GM12878 (cell line): ENCODE measurements at regions of chr14 and their contacts with region 1.

Region 1: GRCh38 chr14:67943947-67944346 is 124.4 kb downstream of the RAD51B start:
- DNase-seq: peak; percentile 49
- ATAC-seq: peak; percentile 89
- H3K4me3 ChIP-seq: no peak overlapping the region
- H3K27ac ChIP-seq: no peak overlapping the region
- H3K4me1 ChIP-seq: no peaks in the 10 kb centered on the region
- H3K27me3 ChIP-seq: no peaks in the 10 kb centered on the region
- CTCF ChIP-seq: peak; percentile 50 to 78 (median 68); a peak in 5 of 6 replicates
- EP300 ChIP-seq: no peak
- POLR2A ChIP-seq: no peak
- RAD21 ChIP-seq: peak; percentile 94

Region 2: DNA sequence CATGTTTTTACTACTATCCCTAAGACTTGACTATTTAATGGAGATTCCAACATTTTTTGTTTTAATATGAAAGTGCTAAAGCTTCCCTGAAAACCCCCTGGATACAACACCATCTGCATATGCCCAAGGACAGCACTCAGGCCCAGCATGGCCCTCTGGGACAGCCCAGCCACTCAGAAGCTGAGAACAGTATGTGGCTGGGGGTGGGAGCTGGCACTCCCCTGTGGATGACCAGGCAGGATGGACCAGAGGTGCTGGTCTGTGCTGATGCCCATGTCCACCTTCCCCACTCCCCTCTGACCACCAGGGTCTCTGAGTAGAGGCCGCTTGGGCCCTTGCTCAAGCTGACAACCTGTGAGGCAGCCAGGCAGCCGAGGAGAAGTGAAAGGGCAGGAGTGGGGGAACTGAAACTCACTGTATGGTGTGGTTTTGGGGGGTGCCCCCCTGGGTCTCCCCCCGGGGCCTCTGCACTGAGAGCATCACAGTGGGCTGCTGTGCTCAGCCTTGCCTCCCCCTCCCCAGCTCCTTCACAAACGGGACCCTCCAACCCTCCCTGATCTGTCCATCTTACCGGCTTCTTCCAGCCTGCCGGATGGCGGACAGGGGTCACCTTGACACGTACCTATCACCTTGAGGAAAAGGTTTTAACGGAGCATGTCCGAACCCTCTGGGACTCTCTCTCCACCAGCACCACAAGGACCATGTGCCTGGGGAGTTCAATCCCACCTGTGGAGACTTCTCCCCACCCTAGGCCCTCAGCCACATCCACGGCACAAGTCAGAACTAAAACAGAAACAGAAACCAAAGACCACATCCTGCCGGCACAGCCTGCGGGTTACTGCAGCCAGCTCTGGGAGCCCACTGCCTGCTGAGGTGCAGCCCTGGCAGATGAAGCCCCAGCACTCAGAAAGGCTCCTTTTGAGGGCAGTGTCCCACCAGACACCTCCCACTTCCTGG is 455.7 kb before region 1 on chr14 and contains the start of gene TMEM229B:
- CTCF ChIA-PET with region 1: no interaction called
- POLR2A ChIA-PET with region 1: no interaction called
- RAD21 ChIA-PET with region 1: no interaction called
- SMC1A ChIA-PET with region 1: no interaction called
- in situ Hi-C with region 1: no loop called
- intact Hi-C with region 1: no loop called
- DNase-seq: peak; percentile 94
- ATAC-seq: peak; percentile 95
- H3K4me3 ChIP-seq: peak within 1 kb of the TSS; percentile 50; the same call in 1 of the 2 replicates
- H3K27ac ChIP-seq: peak within 1 kb of the TSS; percentile 96
- H3K4me1 ChIP-seq: peaks cover 47% of the 10 kb centered on the region
- H3K27me3 ChIP-seq: no peaks in the 10 kb centered on the region
- CTCF ChIP-seq: no peak
- EP300 ChIP-seq: peak; percentile 81 to 88
- POLR2A ChIP-seq: no peak; the same call in 1 of the 2 replicates
- RAD21 ChIP-seq: peak; percentile 28; the same call in 1 of the 2 replicates
- polyA plus RNA-seq, gene TMEM229B: 0.24 to 0.32 TPM

Region 3: DNA sequence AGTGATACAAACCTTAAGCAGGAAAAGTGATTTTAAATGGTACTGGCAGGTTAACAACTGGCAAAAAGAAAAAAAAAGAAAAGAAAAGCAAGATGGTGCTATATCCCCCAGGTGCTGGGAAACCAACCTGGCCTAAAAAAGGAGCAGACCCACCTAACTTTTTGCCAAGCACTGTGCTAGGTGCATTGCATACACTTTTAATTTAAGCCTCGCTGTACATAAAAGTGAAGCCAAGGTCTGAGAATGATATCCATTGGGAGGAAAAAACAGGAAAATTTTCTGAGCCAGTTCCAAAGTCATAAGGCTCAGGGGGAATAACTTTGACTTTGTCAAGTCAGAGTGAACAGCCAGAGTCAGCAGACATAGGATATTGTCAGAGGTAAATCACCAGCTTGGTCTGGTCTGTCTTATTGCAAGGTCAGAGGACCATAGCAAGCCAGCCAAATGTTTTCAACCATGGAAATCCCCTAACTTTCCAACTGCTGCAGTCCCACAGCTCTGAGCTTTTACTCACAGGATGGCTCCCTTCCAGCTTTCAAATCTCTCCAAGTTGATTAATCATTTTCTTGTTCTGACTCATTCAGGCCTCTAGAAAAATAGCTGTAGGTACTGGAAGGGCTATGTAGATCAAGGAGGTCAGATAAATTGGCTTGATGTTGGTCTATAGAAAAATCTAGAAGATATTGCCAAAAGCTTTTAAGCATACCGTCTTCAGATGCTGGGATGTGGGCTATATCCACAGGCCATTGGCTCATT is 288.5 kb after region 1 on chr14:
- CTCF ChIA-PET with region 1: interaction called, 6 read pairs
- POLR2A ChIA-PET with region 1: no interaction called
- RAD21 ChIA-PET with region 1: interaction called, 9 read pairs
- SMC1A ChIA-PET with region 1: interaction called, 19 read pairs
- in situ Hi-C with region 1: no loop called
- intact Hi-C with region 1: no loop called
- DNase-seq: peak; percentile 99
- ATAC-seq: peak; percentile 97
- H3K4me3 ChIP-seq: no peak overlapping the region
- H3K27ac ChIP-seq: peak overlapping the region; percentile 84
- H3K4me1 ChIP-seq: peaks cover 19% of the 10 kb centered on the region
- H3K27me3 ChIP-seq: no peaks in the 10 kb centered on the region
- CTCF ChIP-seq: no peak
- EP300 ChIP-seq: peak; percentile 84 to 87
- POLR2A ChIP-seq: no peak
- RAD21 ChIP-seq: no peak

Region 4: GRCh38 chr14:68274725-68275124 is 330.8 kb after region 1 on chr14:
- CTCF ChIA-PET with region 1: interaction called, 5 read pairs
- POLR2A ChIA-PET with region 1: interaction called, 3 read pairs
- RAD21 ChIA-PET with region 1: interaction called, 12 read pairs
- SMC1A ChIA-PET with region 1: interaction called, 10 read pairs
- in situ Hi-C with region 1: no loop called
- intact Hi-C with region 1: no loop called
- DNase-seq: no peak
- ATAC-seq: no peak
- H3K4me3 ChIP-seq: no peak overlapping the region
- H3K27ac ChIP-seq: peak overlapping the region; percentile 91
- H3K4me1 ChIP-seq: peaks cover 78% of the 10 kb centered on the region
- H3K27me3 ChIP-seq: no peaks in the 10 kb centered on the region
- CTCF ChIP-seq: peak in 1 of 3 experiments; percentile 22; a peak in 1 of 6 replicates
- EP300 ChIP-seq: no peak
- POLR2A ChIP-seq: no peak
- RAD21 ChIP-seq: 0 out of 2 replicates have a peak, but pooled peaks have one; percentile 21

Region 5: GRCh38 chr14:68476212-68476907 is 532.4 kb after region 1 on chr14:
- CTCF ChIA-PET with region 1: no interaction called
- POLR2A ChIA-PET with region 1: no interaction called
- RAD21 ChIA-PET with region 1: no interaction called
- SMC1A ChIA-PET with region 1: interaction called, 3 read pairs
- in situ Hi-C with region 1: no loop called
- intact Hi-C with region 1: loop called (anchors 10 kb)
- DNase-seq: peak; percentile 93
- ATAC-seq: peak; percentile 96
- H3K4me3 ChIP-seq: no peak overlapping the region
- H3K27ac ChIP-seq: peak overlapping the region; percentile 88
- H3K4me1 ChIP-seq: peaks cover 27% of the 10 kb centered on the region
- H3K27me3 ChIP-seq: no peaks in the 10 kb centered on the region
- CTCF ChIP-seq: no peak
- EP300 ChIP-seq: peak; percentile 70 to 97; a peak in 3 of 4 replicates
- POLR2A ChIP-seq: no peak; the same call in 1 of the 2 replicates
- RAD21 ChIP-seq: peak; percentile 30; the same call in 1 of the 2 replicates

Region 6: DNA sequence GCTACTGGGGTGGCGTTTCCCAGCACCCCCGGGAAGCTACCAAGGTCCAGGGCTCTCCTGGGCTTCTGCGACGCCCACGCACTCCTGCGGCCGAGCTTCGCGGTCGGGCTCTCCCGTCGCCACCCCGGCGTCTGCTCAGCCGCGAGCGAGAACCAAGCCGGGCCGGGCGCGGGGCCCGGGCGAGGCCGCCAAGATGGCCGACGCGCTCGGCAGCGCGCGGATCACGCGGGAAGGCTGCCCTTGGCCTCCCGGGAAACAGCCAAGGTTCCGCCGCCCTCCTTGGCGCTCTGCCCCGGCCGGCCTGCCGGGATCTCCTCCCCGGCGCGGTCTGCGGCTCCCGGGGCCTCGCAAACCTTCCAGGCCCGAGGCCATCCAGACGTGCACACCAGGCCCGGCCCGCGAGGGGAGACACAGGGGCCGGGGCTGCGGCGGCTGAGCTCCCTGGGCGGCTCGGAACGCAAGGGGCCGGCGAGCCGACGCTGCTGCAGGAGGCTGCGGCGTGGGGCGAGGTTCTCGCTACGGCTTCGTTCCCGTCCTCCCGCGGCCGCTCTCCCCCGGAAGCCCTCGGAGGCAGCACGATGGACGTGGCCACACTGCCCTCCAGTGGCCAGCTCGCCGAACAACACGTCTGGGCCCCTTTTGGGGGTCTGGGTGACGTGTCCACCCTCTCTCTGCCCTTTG is 872.5 kb after region 1 on chr14:
- CTCF ChIA-PET with region 1: interaction called, 56 read pairs
- POLR2A ChIA-PET with region 1: interaction called, 4 read pairs
- RAD21 ChIA-PET with region 1: interaction called, 33 read pairs
- SMC1A ChIA-PET with region 1: interaction called, 54 read pairs
- in situ Hi-C with region 1: loop called (anchors 10 kb)
- intact Hi-C with region 1: loop called (anchors 1 kb)
- DNase-seq: no peak
- ATAC-seq: peak; percentile 64
- H3K4me3 ChIP-seq: peak overlapping the region; percentile 58
- H3K27ac ChIP-seq: peak overlapping the region; percentile 95
- H3K4me1 ChIP-seq: peaks cover 58% of the 10 kb centered on the region
- H3K27me3 ChIP-seq: no peaks in the 10 kb centered on the region
- CTCF ChIP-seq: peak; percentile 89 to 99 (median 92); a peak in 5 of 6 replicates
- EP300 ChIP-seq: 0 out of 4 replicates have a peak, but pooled peaks of 1 of the 2 experiments have one; percentile 12
- POLR2A ChIP-seq: peak; percentile 80
- RAD21 ChIP-seq: peak; percentile 92